GM18951 (cell line): ENCODE measurements at regions of chrX and their contacts with region 1.

Region 1: GRCh38 chrX:138775517-138775916 is 64.0 kb upstream of the FGF13 start:
- POLR2A ChIP-seq: no peak

Region 2: GRCh38 chrX:139559383-139560042 is 784.0 kb after region 1 on chrX:
- in situ Hi-C with region 1: loop called (anchors 25 kb)
- POLR2A ChIP-seq: no peak